Aorta (tissue), 5 donors: ENCODE measurements at regions of chr10 and their contacts with region 1.

Region 1: GRCh38 chr10:11515596-11516430 is 95.6 kb downstream of the USP6NL start:
- DNase-seq: no peak
- ATAC-seq: peak; percentile 89
- H3K4me3 ChIP-seq: no peak overlapping the region
- H3K27ac ChIP-seq: no peak overlapping the region
- H3K4me1 ChIP-seq: no peaks in the 10 kb centered on the region
- H3K27me3 ChIP-seq: no peaks in the 10 kb centered on the region

Region 2: DNA sequence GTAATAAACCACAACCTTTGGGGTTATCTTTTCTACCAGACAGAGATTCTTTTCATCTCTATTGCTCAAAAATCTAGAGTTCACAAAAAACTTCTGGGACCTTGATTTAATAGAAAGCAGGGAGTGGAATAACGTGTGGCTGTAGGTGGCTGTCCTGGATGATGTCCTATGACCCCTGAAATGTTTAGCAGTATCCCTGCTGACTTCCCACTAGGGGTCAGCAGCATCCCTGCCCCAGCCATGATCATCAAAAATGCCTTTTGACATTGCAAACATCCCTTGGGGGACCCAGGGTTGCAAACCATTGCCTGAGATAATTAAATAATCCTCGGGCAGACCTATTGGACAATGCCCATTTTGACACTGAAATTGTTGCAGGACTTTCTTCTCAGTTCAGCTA is 81.5 kb before region 1 on chr10:
- intact Hi-C with region 1: no loop called
- DNase-seq: no peak
- ATAC-seq: no peak
- H3K4me3 ChIP-seq: no peak overlapping the region
- H3K27ac ChIP-seq: no peak overlapping the region
- H3K4me1 ChIP-seq: no peaks in the 10 kb centered on the region
- H3K27me3 ChIP-seq: no peaks in the 10 kb centered on the region

Region 3: DNA sequence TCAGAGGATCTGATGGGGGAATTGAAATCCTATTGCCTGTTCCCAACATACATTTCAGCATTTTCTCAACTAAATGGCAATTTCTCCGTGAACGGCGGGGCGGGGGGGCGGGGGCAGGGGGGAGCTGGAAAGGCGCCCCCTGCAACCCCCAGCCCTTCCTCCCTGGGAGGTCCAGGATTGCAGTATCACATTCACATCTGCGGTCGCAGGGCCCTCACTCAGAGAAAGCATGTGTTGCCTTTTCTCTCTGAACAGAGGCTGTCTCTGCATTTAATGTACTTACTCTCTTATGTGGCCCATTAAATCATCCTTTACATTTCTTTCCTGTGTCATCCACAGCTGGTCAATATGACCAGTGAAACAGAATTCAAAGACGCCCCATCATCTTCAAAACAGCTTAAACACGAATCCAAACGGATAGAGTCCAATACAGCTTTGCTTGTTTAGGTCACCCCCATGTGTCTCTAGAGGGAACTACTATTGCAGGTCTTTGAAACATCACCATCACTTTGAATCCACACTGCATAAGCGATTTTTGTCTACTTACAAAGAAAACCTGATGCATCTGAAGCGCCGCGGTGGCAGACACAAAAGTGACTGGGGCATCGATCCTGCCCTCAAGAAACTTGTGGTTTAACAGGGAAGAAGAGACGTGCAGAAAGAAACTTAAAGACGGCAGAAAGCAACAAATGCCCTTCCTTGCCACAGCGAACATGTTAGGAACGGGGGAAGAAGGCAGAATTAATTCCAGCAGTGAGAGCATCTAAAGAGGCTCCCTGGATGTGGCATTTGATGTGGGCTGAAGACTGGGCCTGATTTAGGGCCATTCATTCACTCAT is 209.3 kb after region 1 on chr10:
- intact Hi-C with region 1: loop called (anchors 1 to 10 kb)
- DNase-seq: no peak
- ATAC-seq: no peak
- H3K4me3 ChIP-seq: no peak overlapping the region
- H3K27ac ChIP-seq: no peak overlapping the region
- H3K4me1 ChIP-seq: no peaks in the 10 kb centered on the region
- H3K27me3 ChIP-seq: no peaks in the 10 kb centered on the region

Region 4: DNA sequence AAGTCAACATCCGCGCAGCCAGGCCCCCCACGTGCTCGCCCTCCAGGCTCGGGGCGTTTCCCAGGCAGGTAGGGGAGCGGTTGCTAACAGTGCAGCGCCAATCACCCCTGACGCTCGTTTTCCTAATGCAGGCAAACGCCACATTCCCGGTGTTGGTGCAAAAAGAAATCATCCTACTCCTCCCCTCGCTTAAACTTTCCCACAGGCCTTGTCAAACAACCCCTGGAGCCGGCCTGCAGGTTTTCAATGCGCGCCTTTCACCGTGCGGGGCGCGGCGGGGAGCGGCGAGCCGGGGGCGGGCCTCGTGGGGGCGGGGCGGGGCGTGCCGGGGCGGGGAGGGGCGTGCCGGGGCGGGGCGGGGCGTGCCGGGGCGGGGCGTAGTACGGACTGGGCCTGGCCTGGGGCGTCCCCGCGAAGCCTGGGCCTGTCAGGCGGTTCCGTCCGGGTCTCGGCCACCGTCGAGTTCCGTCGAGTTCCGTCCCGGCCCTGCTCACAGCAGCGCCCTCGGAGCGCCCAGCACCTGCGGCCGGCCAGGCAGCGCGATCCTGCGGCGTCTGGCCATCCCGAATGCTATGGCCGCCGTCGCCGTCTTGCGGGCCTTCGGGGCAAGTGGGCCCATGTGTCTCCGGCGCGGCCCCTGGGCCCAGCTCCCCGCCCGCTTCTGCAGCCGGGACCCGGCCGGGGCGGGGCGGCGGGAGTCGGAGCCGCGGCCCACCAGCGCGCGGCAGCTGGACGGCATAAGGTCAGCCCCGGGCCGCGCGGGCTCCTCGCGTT is 226.4 kb after region 1 on chr10 and contains the start of gene ECHDC3:
- intact Hi-C with region 1: loop called in 1 of 2 experiments (anchors 5 kb)
- DNase-seq: peak; percentile 78 to 88
- ATAC-seq: peak; percentile 84
- H3K4me3 ChIP-seq: peak within 1 kb of the TSS; percentile 35 to 60
- H3K27ac ChIP-seq: no peak within 1 kb of the TSS
- H3K4me1 ChIP-seq: peaks cover 0 to 1% of the 10 kb centered on the region in 2 donors
- H3K27me3 ChIP-seq: no peaks in the 10 kb centered on the region
- total RNA-seq, gene ECHDC3: 7.3 to 9.6 TPM

Region 5: DNA sequence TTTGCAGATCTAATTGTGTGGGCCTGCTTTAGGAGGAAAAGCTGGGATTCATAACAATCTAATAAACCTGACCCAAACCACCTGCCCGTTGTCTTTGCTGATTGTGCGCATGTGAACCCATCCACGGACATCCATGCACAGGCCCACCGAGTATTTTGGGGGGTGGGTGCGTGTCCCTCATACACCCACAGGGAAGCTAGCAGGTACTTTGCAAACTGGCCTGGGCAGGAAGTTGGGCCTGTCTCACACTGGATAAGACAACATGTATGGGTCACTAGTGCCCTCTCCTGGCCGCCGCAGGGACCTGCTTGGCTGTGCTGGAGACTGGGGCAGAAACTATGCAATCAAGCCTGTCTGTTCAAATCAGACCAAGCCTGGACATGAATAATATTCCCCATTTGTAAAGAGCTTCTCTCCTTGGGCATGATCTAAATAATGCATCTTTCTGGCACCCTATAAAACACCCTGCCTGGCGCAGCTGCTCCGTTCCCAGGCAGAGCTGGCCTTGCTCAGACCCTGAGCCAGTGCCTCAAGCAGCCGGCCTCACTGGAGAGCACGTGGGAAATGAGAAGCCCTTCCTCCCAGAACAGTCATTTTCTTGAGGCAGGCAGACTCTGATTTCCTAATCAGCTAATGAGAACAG is 242.1 kb after region 1 on chr10:
- intact Hi-C with region 1: loop called (anchors 1 to 2 kb)
- DNase-seq: peak; percentile 91 to 95
- ATAC-seq: peak; percentile 91
- H3K4me3 ChIP-seq: no peak overlapping the region
- H3K27ac ChIP-seq: peak overlapping the region in 1 of 2 donors; percentile 22
- H3K4me1 ChIP-seq: no peaks in the 10 kb centered on the region
- H3K27me3 ChIP-seq: no peaks in the 10 kb centered on the region

Region 6: GRCh38 chr10:11913074-11913641 is 397.3 kb after region 1 on chr10:
- intact Hi-C with region 1: no loop called
- DNase-seq: no peak
- ATAC-seq: no peak
- H3K4me3 ChIP-seq: no peak overlapping the region
- H3K27ac ChIP-seq: no peak overlapping the region
- H3K4me1 ChIP-seq: no peaks in the 10 kb centered on the region
- H3K27me3 ChIP-seq: no peaks in the 10 kb centered on the region